ENCODE measurements at regions of chr18 and their contacts with region 1.

Region 1: DNA sequence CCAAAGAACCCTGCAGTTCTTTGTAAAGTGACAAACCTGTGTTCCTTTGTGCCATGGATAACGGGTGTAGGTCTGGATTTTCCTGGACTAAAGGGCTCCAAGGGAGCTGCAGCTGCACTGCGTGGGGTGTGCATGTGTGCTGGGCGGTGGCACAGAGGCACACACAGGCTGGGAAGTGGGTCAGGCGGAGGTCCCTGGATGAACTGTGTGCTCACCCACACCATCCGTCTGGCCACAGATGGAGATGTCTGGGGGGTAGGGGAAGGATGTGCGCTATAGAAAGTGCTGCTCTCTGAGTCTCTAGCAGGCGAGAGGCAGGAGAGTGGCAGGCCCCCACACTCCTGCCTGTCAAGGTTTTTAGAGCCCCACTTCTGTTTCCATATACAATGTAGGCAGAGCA is 137.2 kb downstream of the LOXHD1 start:
- DNase-seq: no peak

Region 2: DNA sequence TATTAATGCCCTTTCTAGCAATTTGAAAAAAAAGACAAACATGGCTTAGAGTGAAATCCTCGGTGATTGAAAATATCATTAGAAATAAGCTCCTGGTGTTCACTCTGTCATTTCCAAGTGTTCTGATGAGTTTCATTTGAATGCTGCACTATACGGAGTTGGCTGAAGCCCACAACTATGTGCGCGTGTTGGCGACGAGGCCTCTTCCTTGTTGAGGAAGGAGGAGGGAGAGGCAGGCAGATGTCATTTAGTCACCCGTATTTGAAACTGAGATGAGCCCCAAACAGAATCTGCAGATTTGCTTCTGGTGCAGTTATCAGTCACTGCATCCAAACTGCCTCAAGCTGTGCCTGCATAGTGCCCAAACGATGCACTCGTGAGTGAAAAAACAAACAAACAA is 755.1 kb after region 1 on chr18:
- intact Hi-C with region 1: loop called in 1 of 2 experiments (anchors 5 kb)
- DNase-seq: no peak

Measured in posterior vena cava (tissue), 2 donors.